ENCODE measurements at regions of chr17 and their contacts with region 1.

Region 1: GRCh38 chr17:34146440-34147043 is 108.5 kb upstream of the CCL2 start:
- DNase-seq: peak in 1 of 2 experiments; percentile 40
- H3K4me3 ChIP-seq: no peak overlapping the region
- H3K27ac ChIP-seq: no peak overlapping the region
- H3K4me1 ChIP-seq: no peaks in the 10 kb centered on the region
- H3K27me3 ChIP-seq: no peaks in the 10 kb centered on the region
- CTCF ChIP-seq: peak; percentile 76

Region 2: DNA sequence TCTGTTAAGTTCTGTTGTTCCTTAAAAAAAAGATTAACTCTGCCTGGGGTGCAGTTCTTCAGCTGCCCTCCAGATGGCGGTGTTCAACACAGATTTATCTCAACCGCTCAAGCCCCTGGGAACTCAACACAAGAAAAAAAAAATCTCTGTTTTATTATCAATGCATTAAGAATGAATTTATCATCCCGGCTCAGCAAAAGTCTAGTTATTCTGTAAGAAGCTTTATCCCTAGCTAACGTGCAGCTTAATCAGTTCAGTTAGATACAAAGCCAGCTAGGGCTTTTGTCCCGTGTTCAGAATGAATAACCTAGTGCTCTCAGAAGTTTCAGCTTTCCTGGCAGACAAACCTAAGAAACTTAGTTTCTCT is 367.3 kb before region 1 on chr17:
- CTCF ChIA-PET with region 1: no interaction called
- POLR2A ChIA-PET with region 1: no interaction called
- intact Hi-C with region 1: loop called (anchors 1 kb)
- DNase-seq: peak; percentile 31 to 38
- H3K4me3 ChIP-seq: no peak overlapping the region
- H3K27ac ChIP-seq: no peak overlapping the region
- H3K4me1 ChIP-seq: no peaks in the 10 kb centered on the region
- H3K27me3 ChIP-seq: peaks cover 21% of the 10 kb centered on the region
- CTCF ChIP-seq: peak; percentile 98

Region 3: DNA sequence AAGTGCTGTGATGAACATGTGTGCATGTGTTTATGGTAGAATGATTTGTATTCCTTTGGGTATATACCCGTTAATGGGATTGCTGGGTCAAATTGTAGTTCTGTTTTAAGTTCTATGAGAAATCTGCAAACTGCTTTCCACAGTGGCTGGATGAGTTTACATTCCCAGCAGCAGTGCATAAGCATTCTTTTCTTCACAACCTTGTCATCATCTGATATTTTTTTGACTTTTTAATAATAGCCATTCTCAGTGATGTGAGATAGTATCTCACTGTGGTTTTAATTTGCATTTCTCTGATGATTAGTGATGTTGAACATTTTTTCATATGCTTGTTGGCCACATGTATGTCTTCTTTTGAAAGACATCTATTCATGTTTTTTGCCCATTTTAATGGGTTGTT is 191.2 kb after region 1 on chr17:
- CTCF ChIA-PET with region 1: no interaction called
- POLR2A ChIA-PET with region 1: no interaction called
- intact Hi-C with region 1: no loop called
- DNase-seq: no peak
- H3K4me3 ChIP-seq: no peak overlapping the region
- H3K27ac ChIP-seq: no peak overlapping the region
- H3K4me1 ChIP-seq: no peaks in the 10 kb centered on the region
- H3K27me3 ChIP-seq: peaks cover 5% of the 10 kb centered on the region; the same call in 1 of the 2 replicates
- CTCF ChIP-seq: no peak

Measured in PC-9 (cell line).